Naive thymus-derived CD4-positive, alpha-beta T cell (primary cell): ENCODE measurements at regions of chr19 and their contacts with region 1.

Region 1: DNA sequence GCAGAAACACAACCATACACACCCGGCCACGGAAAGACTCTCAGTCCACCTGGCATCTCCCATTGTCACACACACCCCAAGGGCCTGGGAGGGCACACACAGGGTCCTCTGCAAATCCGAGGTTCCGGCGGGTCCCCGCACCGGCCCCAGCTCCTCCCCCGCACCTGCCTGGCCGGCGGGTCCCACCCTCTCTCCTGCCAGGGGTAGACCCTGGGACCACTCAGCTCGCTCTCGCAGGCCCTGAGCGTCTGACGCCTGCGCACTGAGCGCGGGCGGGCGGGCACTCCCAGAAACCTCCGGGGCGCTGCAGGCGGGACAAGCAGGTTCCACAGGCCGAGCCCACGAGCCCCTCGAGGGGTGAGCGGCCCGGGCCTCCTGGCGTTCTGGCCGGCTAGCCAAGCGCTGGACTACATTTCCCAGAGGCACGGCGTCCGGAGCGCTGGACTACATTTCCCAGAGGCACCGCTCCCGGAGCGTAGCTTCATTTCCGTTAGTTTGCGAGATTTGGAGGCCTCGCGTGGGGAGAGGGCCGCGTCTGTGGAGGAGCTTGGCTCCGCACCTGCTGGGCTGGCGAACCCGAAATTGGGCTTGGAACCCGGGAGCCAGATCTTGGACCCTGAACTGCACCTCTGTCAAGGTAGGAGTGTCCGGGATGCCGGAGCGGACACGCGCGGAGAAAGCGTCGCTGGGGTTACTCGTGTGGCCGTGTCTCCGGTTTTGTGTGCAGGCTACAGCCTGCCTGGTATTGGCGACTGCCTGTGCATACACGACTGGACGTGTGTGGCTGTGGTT is at the start of gene ZNF420:
- DNase-seq: peak; percentile 64 to 89 (median 84)
- ATAC-seq: peak; percentile 98
- H3K4me3 ChIP-seq: peak within 1 kb of the TSS; percentile 92
- H3K4me3 Mint-ChIP-seq: peak within 1 kb of the TSS; percentile 90 to 100 (median 96)
- H3K27ac ChIP-seq: peak within 1 kb of the TSS; percentile 82
- H3K27ac Mint-ChIP-seq: peak within 1 kb of the TSS; percentile 70 to 99 (median 94)
- H3K4me1 ChIP-seq: peaks cover 11 to 19% of the 10 kb centered on the region in 2 donors
- H3K4me1 Mint-ChIP-seq: peaks cover 16 to 43% (median 34%) of the 10 kb centered on the region in 7 donors
- H3K27me3 ChIP-seq: no peaks in the 10 kb centered on the region
- H3K27me3 Mint-ChIP-seq: no peaks in the 10 kb centered on the region
- total RNA-seq, gene ZNF420: 10.8 to 34.9 (median 15.9) TPM

Region 2: GRCh38 chr19:36489118-36489919 is 588.8 kb before region 1 on chr19 and contains the start of gene ZNF566:
- CTCF ChIA-PET with region 1: no interaction called
- POLR2A ChIA-PET with region 1: no interaction called
- intact Hi-C with region 1: loop called in 1 of 2 experiments (anchors 1 kb)
- DNase-seq: peak; percentile 74 to 98 (median 94)
- ATAC-seq: peak; percentile 95
- H3K4me3 ChIP-seq: peak within 1 kb of the TSS; percentile 97
- H3K4me3 Mint-ChIP-seq: peak within 1 kb of the TSS; percentile 93 to 99 (median 98)
- H3K27ac ChIP-seq: peak within 1 kb of the TSS; percentile 90
- H3K27ac Mint-ChIP-seq: peak within 1 kb of the TSS; percentile 93 to 99 (median 98)
- H3K4me1 ChIP-seq: peaks cover 9 to 10% of the 10 kb centered on the region in 2 donors
- H3K4me1 Mint-ChIP-seq: peaks cover 22 to 43% (median 30%) of the 10 kb centered on the region in 7 donors
- H3K27me3 ChIP-seq: no peaks in the 10 kb centered on the region
- H3K27me3 Mint-ChIP-seq: no peaks in the 10 kb centered on the region
- total RNA-seq, gene ZNF566: 9.2 to 29.8 (median 9.3) TPM

Region 3: DNA sequence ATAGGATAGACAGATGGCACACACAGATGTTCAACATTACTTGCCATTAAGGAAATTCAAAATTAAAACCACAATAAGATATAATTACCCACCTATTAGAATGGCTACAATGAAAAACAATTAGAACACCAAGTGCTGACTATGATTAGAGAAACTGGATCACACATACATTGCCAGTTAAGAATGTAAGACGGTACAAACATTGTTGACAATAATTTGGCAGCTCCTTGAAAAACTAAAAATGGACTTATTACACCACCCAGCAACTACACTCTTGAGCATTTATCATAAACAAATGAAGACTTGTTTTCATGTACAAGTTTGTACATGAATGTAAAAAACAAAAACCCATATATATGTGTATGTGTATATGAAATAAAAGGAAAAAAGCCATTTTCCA is 425.2 kb before region 1 on chr19:
- CTCF ChIA-PET with region 1: no interaction called
- POLR2A ChIA-PET with region 1: no interaction called
- intact Hi-C with region 1: no loop called
- DNase-seq: no peak
- ATAC-seq: no peak
- H3K4me3 ChIP-seq: no peak overlapping the region
- H3K4me3 Mint-ChIP-seq: no peak overlapping the region
- H3K27ac ChIP-seq: no peak overlapping the region
- H3K27ac Mint-ChIP-seq: no peak overlapping the region
- H3K4me1 ChIP-seq: no peaks in the 10 kb centered on the region
- H3K4me1 Mint-ChIP-seq: no peaks in the 10 kb centered on the region
- H3K27me3 ChIP-seq: no peaks in the 10 kb centered on the region
- H3K27me3 Mint-ChIP-seq: no peaks in the 10 kb centered on the region

Region 4: GRCh38 chr19:36837906-36838783 is 240.0 kb before region 1 on chr19 and contains the start of gene ZNF790:
- CTCF ChIA-PET with region 1: no interaction called
- POLR2A ChIA-PET with region 1: no interaction called
- intact Hi-C with region 1: loop called (anchors 5 kb)
- DNase-seq: peak; percentile 68 to 91 (median 85)
- ATAC-seq: peak; percentile 95
- H3K4me3 ChIP-seq: peak within 1 kb of the TSS; percentile 92
- H3K4me3 Mint-ChIP-seq: peak within 1 kb of the TSS in 1 of 10 donors; percentile 22
- H3K27ac ChIP-seq: peak within 1 kb of the TSS; percentile 92
- H3K27ac Mint-ChIP-seq: peak within 1 kb of the TSS in 5 of 9 donors; percentile 39 to 65 (median 51)
- H3K4me1 ChIP-seq: peaks cover 6 to 11% of the 10 kb centered on the region in 2 donors
- H3K4me1 Mint-ChIP-seq: peaks cover 0 to 21% (median 14%) of the 10 kb centered on the region in 7 donors
- H3K27me3 ChIP-seq: no peaks in the 10 kb centered on the region
- H3K27me3 Mint-ChIP-seq: no peaks in the 10 kb centered on the region
- total RNA-seq, gene ZNF790: 2.6 to 14.4 (median 7.3) TPM

Region 5: DNA sequence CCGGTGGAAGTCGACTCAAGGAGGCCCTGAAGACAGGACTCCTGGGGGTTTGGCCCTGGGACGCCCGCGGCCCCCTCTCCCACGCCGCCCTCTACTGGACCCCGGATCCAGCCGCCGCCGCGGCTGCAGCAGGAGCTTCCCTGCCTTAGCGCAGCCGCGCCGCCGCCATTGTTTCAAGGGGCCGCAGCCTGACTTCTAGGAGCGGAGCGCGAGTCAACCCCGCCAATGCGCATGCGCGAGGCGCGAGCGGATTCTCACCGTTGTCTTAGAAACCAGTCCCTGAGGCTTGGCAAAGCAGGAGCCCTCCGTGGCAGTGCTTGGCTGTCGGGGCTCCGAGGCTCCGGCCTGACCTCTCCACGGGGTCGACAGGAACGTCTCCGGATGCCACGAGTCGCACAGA is 19.0 kb before region 1 on chr19:
- CTCF ChIA-PET with region 1: no interaction called
- POLR2A ChIA-PET with region 1: no interaction called
- intact Hi-C with region 1: no loop called
- DNase-seq: no peak
- ATAC-seq: no peak
- H3K4me3 ChIP-seq: no peak overlapping the region
- H3K4me3 Mint-ChIP-seq: no peak overlapping the region
- H3K27ac ChIP-seq: no peak overlapping the region
- H3K27ac Mint-ChIP-seq: no peak overlapping the region
- H3K4me1 ChIP-seq: no peaks in the 10 kb centered on the region
- H3K4me1 Mint-ChIP-seq: no peaks in the 10 kb centered on the region
- H3K27me3 ChIP-seq: no peaks in the 10 kb centered on the region
- H3K27me3 Mint-ChIP-seq: no peaks in the 10 kb centered on the region

Region 6: DNA sequence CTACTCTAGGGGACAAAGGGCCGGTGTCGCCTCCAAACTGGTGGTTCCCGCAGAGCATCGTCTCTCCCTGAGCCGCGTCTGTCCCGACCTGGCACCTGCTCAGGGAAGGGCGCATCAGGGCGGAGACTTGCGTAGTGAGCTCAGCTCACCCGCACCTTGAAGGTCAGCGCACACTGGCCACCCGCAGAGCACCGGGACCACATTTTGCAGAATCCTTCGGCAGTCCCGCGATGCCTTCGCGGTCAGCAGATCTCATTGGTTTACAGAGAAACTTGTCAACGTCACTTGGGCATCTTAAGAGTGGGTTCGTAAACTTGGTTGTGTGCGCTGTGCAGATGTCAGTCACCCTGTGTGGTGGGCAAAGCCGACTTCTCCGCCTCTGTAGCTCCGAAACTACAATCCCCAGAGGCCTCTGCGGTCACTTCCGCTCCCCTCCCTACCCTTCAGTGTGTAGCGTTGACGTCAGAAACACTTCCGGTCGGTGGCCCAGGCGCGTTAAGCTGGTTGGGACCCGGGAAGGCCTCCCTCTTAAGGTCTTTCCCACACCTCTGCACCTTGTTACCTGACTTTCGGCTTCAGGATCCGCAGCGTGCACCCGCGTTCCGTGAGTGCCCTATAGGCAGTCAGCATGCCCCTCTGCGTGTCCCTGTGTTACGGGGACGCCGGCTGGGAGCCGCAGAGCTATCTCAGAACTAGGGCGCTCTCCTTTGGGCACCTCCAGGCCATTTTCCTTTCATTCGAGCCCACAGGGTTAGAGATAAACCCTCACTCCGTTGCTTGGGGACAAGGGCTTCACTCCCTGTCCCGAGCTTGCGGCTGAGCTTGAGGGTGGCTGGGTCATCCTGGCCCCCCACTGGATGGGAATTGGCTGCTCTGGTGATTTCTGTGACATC is 256.3 kb after region 1 on chr19:
- CTCF ChIA-PET with region 1: no interaction called
- POLR2A ChIA-PET with region 1: no interaction called
- intact Hi-C with region 1: loop called in 1 of 2 experiments (anchors 1 kb)
- DNase-seq: peak; percentile 52 to 93 (median 84)
- ATAC-seq: peak; percentile 99
- H3K4me3 ChIP-seq: peak overlapping the region; percentile 69
- H3K4me3 Mint-ChIP-seq: peak overlapping the region; percentile 82 to 93 (median 90)
- H3K27ac ChIP-seq: peak overlapping the region; percentile 88
- H3K27ac Mint-ChIP-seq: peak overlapping the region; percentile 77 to 97 (median 93)
- H3K4me1 ChIP-seq: peaks cover 6 to 10% of the 10 kb centered on the region in 2 donors
- H3K4me1 Mint-ChIP-seq: peaks cover 9 to 47% (median 33%) of the 10 kb centered on the region in 7 donors
- H3K27me3 ChIP-seq: no peaks in the 10 kb centered on the region
- H3K27me3 Mint-ChIP-seq: no peaks in the 10 kb centered on the region

Region 7: GRCh38 chr19:37413243-37414084 is 335.3 kb after region 1 on chr19:
- CTCF ChIA-PET with region 1: no interaction called
- POLR2A ChIA-PET with region 1: no interaction called
- intact Hi-C with region 1: no loop called
- DNase-seq: no peak
- ATAC-seq: no peak
- H3K4me3 ChIP-seq: no peak overlapping the region
- H3K4me3 Mint-ChIP-seq: no peak overlapping the region
- H3K27ac ChIP-seq: no peak overlapping the region
- H3K27ac Mint-ChIP-seq: no peak overlapping the region
- H3K4me1 ChIP-seq: no peaks in the 10 kb centered on the region
- H3K4me1 Mint-ChIP-seq: no peaks in the 10 kb centered on the region
- H3K27me3 ChIP-seq: no peaks in the 10 kb centered on the region
- H3K27me3 Mint-ChIP-seq: no peaks in the 10 kb centered on the region

Region 8: DNA sequence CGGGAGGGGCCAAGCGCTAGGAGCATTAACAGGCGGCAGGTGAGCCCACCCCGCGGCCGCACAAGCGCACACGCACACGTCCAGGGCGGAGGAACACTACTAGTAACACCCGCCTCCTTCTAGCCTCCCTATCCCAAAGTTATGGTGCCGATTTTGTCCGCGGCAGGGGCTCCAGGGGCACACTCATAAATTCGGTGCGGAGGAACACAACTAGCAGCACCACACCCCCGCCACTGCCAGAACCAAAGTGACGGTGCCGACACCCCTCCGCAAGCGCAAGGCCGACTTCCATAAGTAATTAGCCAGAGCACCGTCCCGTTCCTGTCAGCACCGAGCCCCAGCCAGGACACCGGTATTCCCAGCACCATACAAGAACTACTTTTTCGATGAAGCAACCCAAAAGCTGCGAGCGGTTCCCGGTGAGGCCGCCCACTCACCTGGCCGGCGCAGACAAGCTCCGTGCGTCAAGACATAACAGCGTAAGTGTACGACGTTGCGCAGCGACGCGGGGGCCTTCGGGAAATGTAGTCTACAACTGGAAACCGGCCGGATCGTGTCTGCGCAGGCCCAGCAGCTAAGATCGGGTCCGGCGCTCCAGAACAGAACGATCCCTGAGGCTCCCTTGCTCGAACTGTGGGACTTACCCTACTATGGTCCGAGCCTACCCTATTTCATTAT is 516.3 kb after region 1 on chr19 and contains the starts of genes ZNF540 and ZNF571:
- CTCF ChIA-PET with region 1: no interaction called
- POLR2A ChIA-PET with region 1: interaction called, 8 read pairs
- intact Hi-C with region 1: loop called (anchors 1 to 2 kb)
- DNase-seq: peak; percentile 70 to 95 (median 92)
- ATAC-seq: peak; percentile 96
- H3K4me3 ChIP-seq: peak within 1 kb of the TSS; percentile 80
- H3K4me3 Mint-ChIP-seq: peak within 1 kb of the TSS; percentile 94 to 100 (median 98)
- H3K27ac ChIP-seq: peak within 1 kb of the TSS; percentile 93
- H3K27ac Mint-ChIP-seq: peak within 1 kb of the TSS; percentile 93 to 100 (median 99)
- H3K4me1 ChIP-seq: peaks cover 7 to 18% of the 10 kb centered on the region in 2 donors
- H3K4me1 Mint-ChIP-seq: peaks cover 13 to 56% (median 39%) of the 10 kb centered on the region in 7 donors
- H3K27me3 ChIP-seq: no peaks in the 10 kb centered on the region
- H3K27me3 Mint-ChIP-seq: no peaks in the 10 kb centered on the region
- total RNA-seq, gene ZNF540: 0.99 to 22.7 (median 17.6) TPM
- total RNA-seq, gene ZNF571: 1.5 to 12.4 (median 9.0) TPM